ENCODE measurements at regions of chr15 and their contacts with region 1.

Region 1: GRCh38 chr15:68316061-68316804 is 38.7 kb downstream of the FEM1B start:
- DNase-seq: no peak
- CTCF ChIP-seq: peak; percentile 20

Region 2: GRCh38 chr15:68372291-68372811 is 56.1 kb after region 1 on chr15:
- in situ Hi-C with region 1: no loop called
- DNase-seq: no peak
- CTCF ChIP-seq: no peak

Region 3: GRCh38 chr15:68543165-68544008 is 227.2 kb after region 1 on chr15:
- in situ Hi-C with region 1: loop called (anchors 25 kb)
- DNase-seq: no peak
- CTCF ChIP-seq: no peak